ENCODE measurements at regions of chr19 and their contacts with region 1.

Region 1: GRCh38 chr19:46513461-46514236 is 18.0 kb upstream of the PNMA8B start:
- DNase-seq: peak; percentile 82
- ATAC-seq: peak; percentile 82
- H3K4me3 Mint-ChIP-seq: no peak overlapping the region
- H3K27ac Mint-ChIP-seq: no peak overlapping the region
- H3K4me1 Mint-ChIP-seq: peaks cover 12% of the 10 kb centered on the region
- H3K27me3 Mint-ChIP-seq: peaks cover 37% of the 10 kb centered on the region

Region 2: DNA sequence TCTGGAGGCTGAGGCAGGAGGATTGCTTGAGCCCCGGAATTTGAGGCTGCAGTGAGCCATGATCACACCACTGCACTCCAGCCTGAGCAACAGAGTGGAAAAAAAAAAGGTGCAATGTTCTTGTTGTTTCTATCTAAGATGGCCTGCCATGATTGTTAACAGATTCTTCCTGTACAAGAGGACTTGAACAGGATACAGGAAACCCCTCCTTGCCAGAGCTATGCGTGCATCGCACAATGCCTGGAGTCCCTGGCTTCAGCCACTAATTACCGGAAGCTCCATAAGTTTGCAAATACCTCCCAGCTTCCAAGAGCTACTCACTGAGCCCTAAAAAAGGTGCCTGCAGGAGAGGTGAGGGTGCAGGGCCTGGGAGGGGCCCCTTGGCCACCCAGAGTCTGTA is 229.9 kb before region 1 on chr19:
- CTCF ChIA-PET with region 1: interaction called, 10 read pairs
- DNase-seq: no peak
- ATAC-seq: no peak
- H3K4me3 Mint-ChIP-seq: no peak overlapping the region
- H3K27ac Mint-ChIP-seq: no peak overlapping the region
- H3K4me1 Mint-ChIP-seq: no peaks in the 10 kb centered on the region
- H3K27me3 Mint-ChIP-seq: peaks cover 9% of the 10 kb centered on the region

Region 3: GRCh38 chr19:46394402-46394797 is 119.2 kb before region 1 on chr19:
- CTCF ChIA-PET with region 1: interaction called, 57 read pairs
- DNase-seq: no peak
- ATAC-seq: no peak
- H3K4me3 Mint-ChIP-seq: no peak overlapping the region
- H3K27ac Mint-ChIP-seq: no peak overlapping the region
- H3K4me1 Mint-ChIP-seq: peaks cover 3% of the 10 kb centered on the region
- H3K27me3 Mint-ChIP-seq: peaks cover 11% of the 10 kb centered on the region

Region 4: DNA sequence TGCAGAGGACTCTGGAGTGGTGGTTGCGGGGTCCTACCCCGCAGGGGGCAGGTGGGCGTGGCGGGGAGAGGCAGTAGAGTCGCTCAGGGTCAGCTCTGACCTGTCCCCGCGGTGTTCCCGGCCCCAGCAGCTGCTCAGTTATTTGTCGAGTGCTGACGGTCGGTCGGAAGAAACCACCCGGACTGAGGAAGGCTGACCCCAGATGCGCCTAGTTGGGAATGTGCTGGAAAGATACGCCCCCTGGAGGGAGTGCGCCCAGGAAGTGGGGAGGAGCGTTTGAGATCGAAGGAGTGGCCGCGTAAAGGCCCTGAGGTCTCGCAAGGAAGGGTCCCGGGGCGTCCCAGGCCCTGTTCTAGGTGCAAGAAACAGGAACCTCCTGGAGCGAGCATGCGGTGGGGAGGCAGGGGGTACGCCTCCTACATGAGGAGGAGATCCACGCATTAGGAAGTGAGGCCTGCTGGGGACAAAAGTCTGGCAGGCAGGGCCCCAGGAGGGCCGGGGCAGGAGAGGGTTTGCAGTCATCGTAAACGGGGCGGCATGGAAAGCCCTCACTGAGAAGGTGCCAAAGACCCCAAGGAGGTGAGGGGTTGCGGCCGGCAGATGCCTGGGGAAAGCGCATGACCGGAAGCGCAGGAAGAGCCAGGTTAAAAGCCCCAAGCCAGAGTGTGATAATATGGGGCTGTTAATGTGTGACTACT is 109.4 kb before region 1 on chr19:
- CTCF ChIA-PET with region 1: interaction called, 10 read pairs
- DNase-seq: no peak
- ATAC-seq: no peak
- H3K4me3 Mint-ChIP-seq: no peak overlapping the region
- H3K27ac Mint-ChIP-seq: no peak overlapping the region
- H3K4me1 Mint-ChIP-seq: peaks cover 11% of the 10 kb centered on the region
- H3K27me3 Mint-ChIP-seq: peaks cover 63% of the 10 kb centered on the region

Region 5: GRCh38 chr19:46529622-46530462 is 16.2 kb after region 1 on chr19:
- CTCF ChIA-PET with region 1: interaction called, 51 read pairs
- DNase-seq: peak; percentile 73
- ATAC-seq: peak; percentile 73
- H3K4me3 Mint-ChIP-seq: no peak overlapping the region
- H3K27ac Mint-ChIP-seq: no peak overlapping the region
- H3K4me1 Mint-ChIP-seq: peaks cover 11% of the 10 kb centered on the region
- H3K27me3 Mint-ChIP-seq: peaks cover under 1% of the 10 kb centered on the region

Region 6: GRCh38 chr19:46537136-46538097 is 23.8 kb after region 1 on chr19:
- CTCF ChIA-PET with region 1: interaction called, 154 read pairs
- DNase-seq: peak; percentile 65
- ATAC-seq: peak; percentile 72
- H3K4me3 Mint-ChIP-seq: no peak overlapping the region
- H3K27ac Mint-ChIP-seq: no peak overlapping the region
- H3K4me1 Mint-ChIP-seq: no peaks in the 10 kb centered on the region
- H3K27me3 Mint-ChIP-seq: peaks cover 24% of the 10 kb centered on the region

Region 7: DNA sequence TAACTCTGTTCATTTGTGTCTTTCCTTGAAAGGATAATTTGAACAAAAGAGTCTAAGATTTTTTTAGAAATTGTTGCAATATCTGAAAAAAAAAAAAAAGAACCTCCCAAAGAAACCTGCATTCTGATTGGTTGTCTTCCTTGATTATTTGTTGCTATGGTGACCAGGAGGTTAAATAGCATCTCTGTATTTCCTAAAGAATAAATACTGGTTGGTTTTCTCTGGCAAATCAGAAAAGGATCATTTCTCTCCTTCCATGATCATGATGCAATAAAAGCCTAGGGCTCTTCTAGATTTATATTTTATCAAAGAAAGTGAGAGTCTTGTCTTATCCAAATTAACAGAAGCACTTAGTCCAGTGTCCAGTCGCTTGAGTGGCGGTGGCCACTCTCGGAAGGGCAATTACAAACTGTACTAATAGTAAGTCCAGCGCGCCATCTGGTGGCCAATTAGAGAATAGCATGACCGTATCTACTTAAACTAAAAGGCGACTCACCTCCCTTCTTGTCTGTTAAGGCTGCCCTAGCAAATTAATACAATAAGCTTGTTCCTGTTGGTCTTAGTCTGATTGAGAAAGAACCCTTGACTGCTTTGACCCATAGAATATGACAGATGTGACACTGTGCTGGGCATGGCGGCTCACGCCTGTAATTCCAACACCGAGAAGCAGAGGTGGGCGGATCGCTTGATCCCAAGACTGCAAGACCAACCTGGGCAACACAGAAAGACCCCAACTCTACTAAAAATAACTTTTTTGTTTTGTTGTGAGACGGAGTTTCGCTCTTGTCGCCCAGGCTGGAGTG is 29.0 kb after region 1 on chr19:
- CTCF ChIA-PET with region 1: interaction called, 154 read pairs
- DNase-seq: peak; percentile 87
- ATAC-seq: peak; percentile 45
- H3K4me3 Mint-ChIP-seq: no peak overlapping the region
- H3K27ac Mint-ChIP-seq: no peak overlapping the region
- H3K4me1 Mint-ChIP-seq: no peaks in the 10 kb centered on the region
- H3K27me3 Mint-ChIP-seq: peaks cover 17% of the 10 kb centered on the region

Measured in activated CD8-positive, alpha-beta memory T cell treated with anti-CD3 and anti-CD28 coated beads, Interleukin-2, amount 10 ng/mL, durations not matched to agents 7 days and 5 days (primary cell).